ENCODE measurements at regions of chr1 and their contacts with region 1.

Region 1: GRCh38 chr1:64663668-64664067 is 81.2 kb upstream of the RAVER2 start:
- DNase-seq: no peak
- ATAC-seq: no peak
- H3K4me3 ChIP-seq: no peak overlapping the region
- H3K4me1 ChIP-seq: no peaks in the 10 kb centered on the region
- CTCF ChIP-seq: no peak

Region 2: GRCh38 chr1:64469977-64470664 is 193.5 kb before region 1 on chr1 and contains the start of gene CACHD1:
- intact Hi-C with region 1: loop called in 1 of 2 experiments (anchors 10 kb)
- DNase-seq: peak; percentile 71 to 75 (median 74)
- ATAC-seq: peak; percentile 77
- H3K4me3 ChIP-seq: peak within 1 kb of the TSS; percentile 24
- H3K4me1 ChIP-seq: peaks cover 15% of the 10 kb centered on the region
- CTCF ChIP-seq: no peak
- total RNA-seq, gene CACHD1: 1.3 to 3.7 (median 2.7) TPM

Region 3: GRCh38 chr1:64839732-64840405 is 176.2 kb after region 1 on chr1:
- intact Hi-C with region 1: no loop called
- DNase-seq: no peak
- ATAC-seq: no peak
- H3K4me3 ChIP-seq: no peak overlapping the region
- H3K4me1 ChIP-seq: no peaks in the 10 kb centered on the region
- CTCF ChIP-seq: no peak

Region 4: GRCh38 chr1:64882574-64883255 is 219.0 kb after region 1 on chr1:
- intact Hi-C with region 1: no loop called
- DNase-seq: no peak
- ATAC-seq: no peak
- H3K4me3 ChIP-seq: no peak overlapping the region
- H3K4me1 ChIP-seq: no peaks in the 10 kb centered on the region
- CTCF ChIP-seq: no peak